Activated CD4-positive, alpha-beta T cell treated with anti-CD3 and anti-CD28 coated beads, Interleukin-2, amount 10 ng/mL, durations not matched to agents 7 days and 5 days (primary cell): ENCODE measurements at regions of chr18 and their contacts with region 1.

Region 1: GRCh38 chr18:77108001-77108692 is 24.4 kb downstream of the MBP start:
- DNase-seq: no peak
- H3K4me3 Mint-ChIP-seq: peak overlapping the region; percentile 53
- H3K27ac Mint-ChIP-seq: peak overlapping the region; percentile 88
- H3K4me1 Mint-ChIP-seq: peaks cover 96% of the 10 kb centered on the region
- H3K27me3 Mint-ChIP-seq: no peaks in the 10 kb centered on the region

Region 2: DNA sequence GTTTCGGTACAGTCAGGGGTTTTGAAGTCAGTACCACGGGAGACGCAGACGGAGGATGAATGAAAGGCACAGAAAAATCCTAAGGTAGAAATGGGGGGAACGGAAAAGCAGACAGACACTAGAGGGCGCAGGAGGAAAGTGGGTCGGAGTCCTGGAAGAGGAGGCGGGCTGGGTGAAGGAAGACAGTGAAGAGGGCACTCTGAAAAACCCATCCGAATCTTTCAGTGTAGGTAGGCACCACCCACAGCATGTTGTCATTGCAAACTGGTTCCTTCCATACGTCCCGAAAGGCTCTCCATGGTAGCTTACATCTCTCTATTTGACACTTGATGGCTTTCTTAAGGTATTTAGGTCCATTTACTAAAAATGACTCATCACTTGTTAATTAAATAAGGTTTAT is 304.3 kb before region 1 on chr18:
- CTCF ChIA-PET with region 1: no interaction called
- POLR2A ChIA-PET with region 1: no interaction called
- DNase-seq: peak; percentile 76
- H3K4me3 Mint-ChIP-seq: peak overlapping the region; percentile 29
- H3K27ac Mint-ChIP-seq: no peak overlapping the region
- H3K4me1 Mint-ChIP-seq: peaks cover 12% of the 10 kb centered on the region
- H3K27me3 Mint-ChIP-seq: peaks cover 7% of the 10 kb centered on the region

Region 3: DNA sequence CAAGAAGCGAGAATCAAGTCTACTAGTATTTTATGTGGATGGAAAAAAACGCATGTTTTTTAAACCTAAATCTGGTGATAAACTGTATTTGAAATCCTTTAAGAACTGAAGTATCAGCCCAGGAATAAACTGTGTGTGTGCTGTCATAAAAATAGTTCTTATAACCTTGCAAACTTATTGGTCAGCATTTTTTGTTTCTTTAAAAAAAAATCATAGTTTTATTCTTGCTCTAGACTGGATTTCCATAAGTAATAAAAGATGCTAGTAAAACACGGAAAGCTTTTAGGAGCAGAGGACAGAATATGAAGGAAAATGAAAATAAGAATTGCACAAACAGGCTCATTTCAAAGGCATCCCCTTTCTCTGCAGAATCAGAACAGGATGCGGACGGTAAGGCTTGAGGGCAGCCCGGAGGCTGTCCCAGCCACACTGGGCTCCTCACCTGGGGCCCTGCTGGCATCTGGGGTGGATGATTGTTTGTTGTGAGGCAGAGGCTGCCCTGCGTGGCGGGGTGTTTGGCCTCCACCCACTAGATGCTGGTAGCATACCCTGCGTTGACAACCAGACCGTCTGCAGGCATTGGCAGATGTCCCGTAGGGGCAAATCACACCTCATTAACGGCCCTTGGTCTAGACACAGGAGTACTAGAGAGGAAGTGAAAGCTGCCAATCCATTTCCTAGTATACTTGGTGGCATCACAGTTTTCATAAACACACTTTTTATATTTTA is 28.0 kb before region 1 on chr18:
- CTCF ChIA-PET with region 1: no interaction called
- POLR2A ChIA-PET with region 1: no interaction called
- DNase-seq: no peak
- H3K4me3 Mint-ChIP-seq: no peak overlapping the region
- H3K27ac Mint-ChIP-seq: no peak overlapping the region
- H3K4me1 Mint-ChIP-seq: peaks cover 71% of the 10 kb centered on the region
- H3K27me3 Mint-ChIP-seq: no peaks in the 10 kb centered on the region

Region 4: DNA sequence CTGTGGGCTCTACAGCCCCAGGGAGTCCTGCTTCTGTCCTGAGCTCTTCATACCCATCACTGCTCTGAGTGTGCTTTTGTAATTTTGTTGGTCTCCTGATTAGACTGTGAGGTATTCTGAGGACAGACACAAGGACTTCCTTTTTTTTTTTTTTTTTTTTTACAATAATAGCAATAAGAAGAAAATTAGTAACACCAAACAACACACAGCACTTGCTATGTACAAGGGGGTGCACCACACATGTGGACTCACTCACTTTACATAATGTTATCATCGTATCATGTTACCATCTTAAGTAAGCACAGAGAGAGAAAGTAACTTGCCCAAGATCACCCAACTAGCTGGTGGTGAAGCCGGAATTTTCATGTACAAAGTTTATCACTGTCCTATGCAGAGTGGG is 10.1 kb before region 1 on chr18:
- CTCF ChIA-PET with region 1: interaction called, 12 read pairs
- POLR2A ChIA-PET with region 1: no interaction called
- DNase-seq: no peak
- H3K4me3 Mint-ChIP-seq: no peak overlapping the region
- H3K27ac Mint-ChIP-seq: peak overlapping the region; percentile 80
- H3K4me1 Mint-ChIP-seq: peaks cover 87% of the 10 kb centered on the region
- H3K27me3 Mint-ChIP-seq: no peaks in the 10 kb centered on the region

Region 5: DNA sequence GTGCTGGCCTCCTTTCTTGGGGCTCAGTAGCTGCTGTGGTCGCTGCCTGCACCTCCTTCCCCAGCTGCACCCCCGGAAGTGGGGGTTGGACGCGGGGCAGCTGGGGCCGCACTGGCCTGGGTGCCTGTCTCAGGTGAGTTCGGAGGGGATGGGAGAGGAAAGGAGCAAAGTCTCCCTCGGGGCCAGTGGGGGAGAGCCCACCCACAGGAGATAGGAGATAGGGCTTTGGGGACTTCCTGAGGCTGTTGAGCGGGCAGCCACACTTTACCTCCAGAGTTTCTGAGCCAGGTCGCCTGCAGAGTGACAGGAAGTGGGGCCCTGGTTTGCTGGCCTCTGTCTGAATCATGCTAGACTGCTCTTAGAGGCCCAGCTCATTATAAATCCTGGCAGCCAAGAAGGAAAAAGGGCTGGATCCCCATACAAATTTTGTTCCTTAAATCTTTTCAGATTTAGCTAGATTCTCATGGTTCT is 16.3 kb after region 1 on chr18:
- CTCF ChIA-PET with region 1: interaction called, 34 read pairs
- POLR2A ChIA-PET with region 1: no interaction called
- DNase-seq: peak; percentile 60
- H3K4me3 Mint-ChIP-seq: peak overlapping the region; percentile 56
- H3K27ac Mint-ChIP-seq: peak overlapping the region; percentile 85
- H3K4me1 Mint-ChIP-seq: peaks cover 94% of the 10 kb centered on the region
- H3K27me3 Mint-ChIP-seq: no peaks in the 10 kb centered on the region

Region 6: DNA sequence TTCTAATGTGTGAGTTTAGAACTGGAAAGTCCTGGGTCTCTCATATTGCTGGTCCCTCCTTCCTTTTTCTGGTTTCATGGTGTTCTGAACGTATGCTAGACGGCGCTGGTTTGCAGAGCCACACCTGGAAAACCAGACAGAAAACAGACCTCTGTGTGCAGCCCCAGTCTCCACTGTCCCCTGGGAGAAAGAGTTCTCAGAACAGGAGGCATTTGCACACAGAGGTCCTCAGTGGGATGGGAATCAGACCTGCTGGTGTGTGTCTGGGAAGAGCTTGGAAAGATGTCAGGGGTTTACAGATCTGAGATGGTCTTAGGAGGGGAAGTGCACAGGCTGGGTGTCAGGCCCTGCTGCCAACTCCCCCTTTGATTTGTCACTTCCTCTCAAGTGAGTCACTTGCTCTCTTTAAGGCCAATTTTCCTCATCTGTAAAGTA is 39.3 kb after region 1 on chr18:
- CTCF ChIA-PET with region 1: no interaction called
- POLR2A ChIA-PET with region 1: no interaction called
- DNase-seq: no peak
- H3K4me3 Mint-ChIP-seq: no peak overlapping the region
- H3K27ac Mint-ChIP-seq: peak overlapping the region; percentile 39
- H3K4me1 Mint-ChIP-seq: peaks cover 41% of the 10 kb centered on the region
- H3K27me3 Mint-ChIP-seq: no peaks in the 10 kb centered on the region

Region 7: DNA sequence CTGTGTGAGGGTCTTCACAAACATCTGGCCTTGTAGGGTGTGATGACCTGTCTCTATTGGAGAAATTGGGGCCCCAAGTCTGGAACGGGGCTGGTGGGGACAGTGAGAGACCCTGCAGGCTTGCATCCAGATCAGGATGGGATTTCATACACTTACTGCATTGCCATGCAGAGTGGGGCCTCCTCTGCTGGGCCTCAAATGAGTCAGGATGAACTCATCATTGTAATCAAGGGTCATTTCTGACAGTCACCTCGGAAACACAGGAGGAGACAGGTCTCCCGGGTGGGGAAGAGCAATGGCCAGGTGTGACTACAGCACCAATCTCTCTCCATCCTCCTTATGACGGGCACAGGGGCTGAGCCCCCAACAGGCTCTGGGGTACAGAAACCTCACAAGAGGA is 93.4 kb after region 1 on chr18:
- CTCF ChIA-PET with region 1: no interaction called
- POLR2A ChIA-PET with region 1: no interaction called
- DNase-seq: no peak
- H3K4me3 Mint-ChIP-seq: no peak overlapping the region
- H3K27ac Mint-ChIP-seq: no peak overlapping the region
- H3K4me1 Mint-ChIP-seq: no peaks in the 10 kb centered on the region
- H3K27me3 Mint-ChIP-seq: peaks cover 5% of the 10 kb centered on the region